ENCODE measurements at regions of chr9 and their contacts with region 1.

Region 1: GRCh38 chr9:22238809-22239684 is 207.6 kb upstream of the DMRTA1 start:
- DNase-seq: peak in 1 of 2 experiments; percentile 66
- H3K4me3 ChIP-seq: peak overlapping the region; percentile 56
- H3K27ac ChIP-seq: peak overlapping the region; percentile 92
- H3K4me1 ChIP-seq: peaks cover 54% of the 10 kb centered on the region
- H3K27me3 ChIP-seq: no peaks in the 10 kb centered on the region
- CTCF ChIP-seq: peak; percentile 52

Region 2: GRCh38 chr9:21985964-21986667 is 252.9 kb before region 1 on chr9:
- CTCF ChIA-PET with region 1: interaction called, 3 read pairs
- POLR2A ChIA-PET with region 1: interaction called, 11 read pairs
- intact Hi-C with region 1: no loop called
- DNase-seq: no peak
- H3K4me3 ChIP-seq: no peak overlapping the region
- H3K27ac ChIP-seq: no peak overlapping the region
- H3K4me1 ChIP-seq: peaks cover 18% of the 10 kb centered on the region; the same call in 1 of the 2 replicates
- H3K27me3 ChIP-seq: no peaks in the 10 kb centered on the region
- CTCF ChIP-seq: no peak

Region 3: DNA sequence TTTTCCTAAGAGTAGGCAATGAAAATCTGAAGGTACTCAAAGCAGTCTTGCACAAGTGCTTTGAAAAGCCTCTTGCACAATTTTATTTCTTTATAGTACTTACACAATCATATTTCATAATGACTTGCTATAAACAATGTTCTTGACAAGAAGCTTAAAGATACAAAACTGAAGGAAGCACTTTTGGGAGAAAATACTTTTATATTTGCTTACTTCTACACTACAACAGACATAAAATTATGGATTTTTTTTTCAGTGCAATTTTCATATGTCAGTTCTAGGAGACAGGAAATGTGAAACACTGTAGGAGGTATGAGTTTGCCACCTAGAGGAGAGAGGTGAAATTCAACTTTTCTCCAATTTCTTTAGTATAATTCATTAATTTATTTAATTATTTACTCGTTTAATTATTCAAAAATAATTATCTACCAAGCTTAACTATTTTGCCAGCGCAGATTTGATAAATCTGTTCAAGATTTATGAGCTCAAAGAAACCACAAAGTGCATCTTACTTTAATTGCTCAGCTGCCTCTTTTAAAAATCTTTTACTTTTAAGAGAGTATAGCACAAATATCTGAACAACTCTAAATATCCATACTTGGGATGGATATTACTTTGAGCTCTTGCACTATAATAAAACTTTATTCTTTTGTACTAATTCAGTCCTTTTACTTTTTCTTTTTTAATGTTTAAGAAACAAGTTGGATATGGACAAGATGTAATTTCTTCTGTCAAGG is 200.9 kb before region 1 on chr9:
- CTCF ChIA-PET with region 1: interaction called, 4 read pairs
- POLR2A ChIA-PET with region 1: no interaction called
- intact Hi-C with region 1: loop called (anchors 2 kb)
- DNase-seq: peak in 1 of 2 experiments; percentile 39
- H3K4me3 ChIP-seq: no peak overlapping the region
- H3K27ac ChIP-seq: 0 out of 2 replicates have a peak overlapping the region, but pooled peaks have one; percentile 24
- H3K4me1 ChIP-seq: peaks cover 57% of the 10 kb centered on the region
- H3K27me3 ChIP-seq: no peaks in the 10 kb centered on the region
- CTCF ChIP-seq: peak; percentile 51; the same call in 1 of the 2 replicates

Region 4: GRCh38 chr9:22084336-22085035 is 154.6 kb before region 1 on chr9:
- CTCF ChIA-PET with region 1: no interaction called
- POLR2A ChIA-PET with region 1: no interaction called
- intact Hi-C with region 1: loop called (anchors 1 kb)
- DNase-seq: peak; percentile 42 to 96
- H3K4me3 ChIP-seq: peak overlapping the region; percentile 43; the same call in 1 of the 2 replicates
- H3K27ac ChIP-seq: peak overlapping the region; percentile 100
- H3K4me1 ChIP-seq: peaks cover 54% of the 10 kb centered on the region
- H3K27me3 ChIP-seq: no peaks in the 10 kb centered on the region
- CTCF ChIP-seq: no peak

Region 5: DNA sequence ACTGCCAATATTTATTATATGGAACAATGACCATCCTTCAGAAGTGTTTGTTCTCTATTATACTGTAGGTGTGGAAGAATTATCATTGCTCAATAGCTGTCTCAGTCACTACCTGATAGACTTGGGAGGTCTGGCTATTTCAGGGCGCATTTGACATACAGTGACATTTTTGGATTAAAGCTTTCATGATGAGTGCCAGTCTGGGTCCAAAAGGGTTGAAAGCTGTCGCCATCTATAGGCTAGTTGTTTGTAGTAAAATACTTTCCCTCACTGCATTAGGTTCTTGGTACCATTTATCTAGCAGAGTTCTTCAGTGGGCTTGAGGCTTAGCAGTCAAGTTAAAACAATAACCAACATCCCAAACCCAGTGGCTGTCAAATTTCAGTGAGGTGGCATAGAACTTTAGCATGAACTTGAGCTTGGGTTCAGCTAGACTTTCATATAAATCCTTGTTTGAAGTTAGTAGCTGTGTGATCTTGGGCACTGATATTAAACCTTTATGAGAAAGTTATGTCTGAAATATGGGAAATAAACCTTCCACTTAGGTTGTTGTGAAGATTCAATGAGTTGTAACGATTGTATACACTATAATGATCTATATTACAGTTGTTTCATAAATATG is 119.4 kb before region 1 on chr9:
- CTCF ChIA-PET with region 1: interaction called, 5 read pairs
- POLR2A ChIA-PET with region 1: interaction called, 3 read pairs
- intact Hi-C with region 1: loop called (anchors 2 kb)
- DNase-seq: no peak
- H3K4me3 ChIP-seq: no peak overlapping the region
- H3K27ac ChIP-seq: no peak overlapping the region
- H3K4me1 ChIP-seq: peaks cover 15% of the 10 kb centered on the region; the same call in 1 of the 2 replicates
- H3K27me3 ChIP-seq: no peaks in the 10 kb centered on the region
- CTCF ChIP-seq: peak; percentile 25; the same call in 1 of the 2 replicates

Region 6: GRCh38 chr9:22211593-22212360 is 27.3 kb before region 1 on chr9:
- CTCF ChIA-PET with region 1: interaction called, 13 read pairs
- POLR2A ChIA-PET with region 1: no interaction called
- intact Hi-C with region 1: no loop called
- DNase-seq: peak; percentile 33 to 93
- H3K4me3 ChIP-seq: no peak overlapping the region
- H3K27ac ChIP-seq: peak overlapping the region; percentile 95
- H3K4me1 ChIP-seq: peaks cover 63% of the 10 kb centered on the region
- H3K27me3 ChIP-seq: no peaks in the 10 kb centered on the region
- CTCF ChIP-seq: no peak

Region 7: DNA sequence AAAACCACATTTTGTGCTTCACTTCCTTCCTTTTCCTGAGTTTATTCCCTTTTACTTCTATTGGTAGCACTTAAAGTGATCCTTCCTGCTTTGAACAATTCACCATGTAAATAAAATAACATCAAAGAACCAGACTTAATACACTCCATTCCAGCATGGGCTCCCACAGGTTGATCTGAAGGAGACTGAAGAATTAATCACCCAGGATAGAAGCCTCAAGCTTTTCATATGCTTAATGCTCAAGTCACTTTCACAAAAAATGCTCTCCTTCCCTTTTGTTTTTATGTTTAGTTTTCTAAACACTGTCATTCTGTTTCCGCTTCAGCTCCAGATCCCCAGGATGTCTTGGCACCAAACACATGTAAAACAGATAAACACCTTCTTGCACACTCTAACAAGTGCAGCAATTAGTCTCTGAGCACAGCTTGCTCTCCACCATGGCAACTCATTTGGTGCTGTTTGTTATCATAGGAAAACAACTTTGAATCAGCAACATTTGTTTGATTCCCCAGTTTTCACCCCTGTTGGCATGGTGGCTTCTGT is 244.6 kb after region 1 on chr9:
- CTCF ChIA-PET with region 1: no interaction called
- POLR2A ChIA-PET with region 1: no interaction called
- intact Hi-C with region 1: no loop called
- DNase-seq: no peak
- H3K4me3 ChIP-seq: no peak overlapping the region
- H3K27ac ChIP-seq: no peak overlapping the region
- H3K4me1 ChIP-seq: no peaks in the 10 kb centered on the region
- H3K27me3 ChIP-seq: no peaks in the 10 kb centered on the region
- CTCF ChIP-seq: no peak

Measured in PC-9 (cell line).